ENCODE measurements at regions of chr13 and their contacts with region 1.

Region 1: DNA sequence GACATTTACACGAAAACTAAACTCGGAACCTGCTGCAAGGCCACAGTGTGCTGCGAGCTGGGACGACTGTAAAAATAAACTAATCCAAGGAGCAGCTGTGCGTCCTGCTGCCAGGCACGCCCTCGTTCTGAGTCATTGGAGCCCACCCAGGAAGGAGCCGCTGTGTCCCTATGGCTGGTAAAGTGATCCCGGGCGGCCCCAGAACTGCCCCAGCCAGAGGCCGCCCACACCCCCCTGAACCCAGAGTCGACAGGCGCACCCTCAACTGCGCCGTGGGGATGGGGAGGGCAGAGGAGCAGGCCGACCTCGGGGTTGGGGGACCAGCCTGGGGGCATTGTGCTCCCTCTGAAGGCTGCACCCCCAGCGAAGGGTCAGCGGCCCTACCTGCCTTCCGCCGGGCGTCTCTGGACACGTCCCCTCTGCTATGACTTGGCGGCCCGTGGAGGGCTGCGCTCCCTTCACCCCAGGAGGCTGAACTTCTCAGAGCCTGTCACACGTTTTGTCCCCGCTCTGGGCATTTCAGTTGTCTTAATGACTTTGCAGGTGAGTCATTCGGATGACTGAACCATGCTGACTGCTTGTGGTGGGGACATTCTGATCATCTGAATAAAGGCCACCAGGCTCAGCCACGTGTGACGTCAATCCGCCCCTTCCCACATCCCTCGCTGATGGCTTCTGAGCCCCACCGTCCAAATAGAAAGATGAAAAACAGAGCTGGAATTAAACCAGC is 42.7 kb downstream of the ADPRHL1 start:
- DNase-seq: no peak
- H3K4me3 ChIP-seq: no peak overlapping the region
- H3K27ac ChIP-seq: no peak overlapping the region
- H3K4me1 ChIP-seq: no peaks in the 10 kb centered on the region
- H3K27me3 ChIP-seq: no peaks in the 10 kb centered on the region
- CTCF ChIP-seq: no peak
- POLR2A ChIP-seq: no peak

Region 2: GRCh38 chr13:113437408-113438010 is 26.9 kb after region 1 on chr13:
- CTCF ChIA-PET with region 1: no interaction called
- POLR2A ChIA-PET with region 1: no interaction called
- dilution Hi-C with region 1: no loop called
- intact Hi-C with region 1: loop called (anchors 1 kb)
- DNase-seq: no peak
- H3K4me3 ChIP-seq: no peak overlapping the region
- H3K27ac ChIP-seq: no peak overlapping the region
- H3K4me1 ChIP-seq: no peaks in the 10 kb centered on the region
- H3K27me3 ChIP-seq: no peaks in the 10 kb centered on the region
- CTCF ChIP-seq: no peak
- POLR2A ChIP-seq: no peak

Region 3: GRCh38 chr13:113528101-113528812 is 117.6 kb after region 1 on chr13:
- CTCF ChIA-PET with region 1: no interaction called
- POLR2A ChIA-PET with region 1: no interaction called
- dilution Hi-C with region 1: no loop called
- intact Hi-C with region 1: no loop called
- DNase-seq: no peak
- H3K4me3 ChIP-seq: no peak overlapping the region
- H3K27ac ChIP-seq: no peak overlapping the region
- H3K4me1 ChIP-seq: no peaks in the 10 kb centered on the region
- H3K27me3 ChIP-seq: no peaks in the 10 kb centered on the region
- CTCF ChIP-seq: no peak
- POLR2A ChIP-seq: no peak

Measured in endothelial cell of umbilical vein (primary cell).